HEK293 (cell line): ENCODE measurements at regions of chr13 and their contacts with region 1.

Region 1: GRCh38 chr13:94620286-94620896 is 18.7 kb downstream of the GPR180 start:
- H3K4me3 ChIP-seq: no peak overlapping the region
- H3K27ac ChIP-seq: no peak overlapping the region
- H3K4me1 ChIP-seq: no peaks in the 10 kb centered on the region
- CTCF ChIP-seq: no peak

Region 2: GRCh38 chr13:94384231-94384905 is 236.0 kb before region 1 on chr13:
- CTCF ChIA-PET with region 1: no interaction called
- POLR2A ChIA-PET with region 1: no interaction called
- H3K4me3 ChIP-seq: no peak overlapping the region
- H3K27ac ChIP-seq: no peak overlapping the region
- H3K4me1 ChIP-seq: no peaks in the 10 kb centered on the region
- CTCF ChIP-seq: no peak

Region 3: DNA sequence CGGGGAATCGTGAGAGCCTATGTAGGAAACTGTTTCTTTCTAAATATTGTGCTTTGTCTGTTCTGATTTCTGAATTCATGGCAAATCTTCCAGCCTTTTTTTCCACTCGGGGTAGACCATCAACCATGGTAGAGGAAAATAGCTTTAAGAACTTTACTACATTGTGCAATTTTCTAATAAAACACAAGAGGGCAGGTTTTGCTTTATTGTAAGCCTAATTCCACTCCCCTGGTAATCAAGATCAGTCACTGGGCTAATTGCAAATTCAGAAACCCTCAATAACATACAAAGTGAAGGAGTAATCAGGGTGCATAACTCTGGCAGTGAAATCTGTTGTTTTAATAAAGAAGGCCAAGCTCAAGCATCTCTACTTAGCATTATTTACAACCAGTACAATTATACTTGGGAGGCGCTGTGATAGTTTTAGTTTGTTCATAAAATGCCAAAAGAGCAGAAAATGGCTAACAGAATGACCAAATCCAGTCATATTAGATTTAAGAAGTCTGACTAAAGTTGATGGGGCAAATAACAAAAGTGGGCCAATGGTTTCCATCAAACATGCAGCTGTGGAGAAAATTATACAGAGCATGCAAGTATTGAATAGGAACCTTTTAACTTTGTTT is 184.7 kb before region 1 on chr13:
- CTCF ChIA-PET with region 1: interaction called, 170 read pairs
- POLR2A ChIA-PET with region 1: interaction called, 5 read pairs
- H3K4me3 ChIP-seq: no peak overlapping the region
- H3K27ac ChIP-seq: no peak overlapping the region
- H3K4me1 ChIP-seq: no peaks in the 10 kb centered on the region
- CTCF ChIP-seq: no peak

Region 4: DNA sequence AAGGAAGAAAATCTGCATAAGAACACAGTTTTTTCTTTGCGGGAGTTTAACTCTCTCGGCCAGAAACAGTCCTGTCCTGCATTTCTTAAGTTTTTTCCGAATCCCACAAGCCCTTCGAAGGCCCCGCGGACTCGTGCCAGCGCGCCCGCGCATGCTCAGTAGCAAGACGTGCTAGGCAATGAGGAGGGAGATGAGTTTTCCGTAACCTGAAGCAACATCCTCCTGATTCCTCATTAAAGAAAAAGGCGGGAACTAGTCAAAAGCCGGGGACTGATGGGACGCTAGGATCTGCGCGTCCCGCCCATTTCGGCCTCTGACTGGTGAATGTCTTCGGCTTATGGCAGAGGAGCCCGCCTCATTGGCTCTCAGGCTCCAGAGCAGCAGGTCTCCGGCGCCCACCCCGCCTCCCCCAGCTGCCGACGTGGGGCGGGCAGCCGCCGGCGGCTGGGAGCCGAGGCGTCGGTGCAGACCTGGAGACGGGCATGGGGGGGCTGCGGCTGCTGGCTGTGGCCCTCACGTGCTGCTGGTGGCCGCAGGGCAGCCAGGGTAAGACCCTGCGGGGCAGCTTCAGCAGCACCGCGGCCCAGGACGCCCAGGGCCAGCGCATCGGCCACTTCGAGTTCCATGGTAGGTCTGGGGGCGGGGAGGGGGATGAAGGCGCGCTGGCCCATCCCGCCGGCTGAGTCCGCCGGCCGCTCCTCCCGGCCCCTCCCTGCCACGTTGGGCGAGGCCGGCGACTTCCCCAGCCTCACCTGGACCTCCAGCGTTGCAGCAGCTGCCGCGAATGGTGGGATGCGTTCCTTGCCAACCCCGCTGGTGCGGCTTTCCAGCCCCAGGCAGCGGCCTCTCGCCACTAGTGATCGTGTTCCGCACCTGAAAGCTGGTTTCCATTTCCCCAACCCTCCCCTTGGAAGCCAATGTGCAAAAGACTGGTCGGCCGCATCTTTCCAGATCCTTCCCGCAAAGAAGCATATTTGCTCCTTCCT is 18.7 kb before region 1 on chr13 and contains the start of gene GPR180:
- CTCF ChIA-PET with region 1: interaction called, 11 read pairs
- POLR2A ChIA-PET with region 1: no interaction called
- H3K4me3 ChIP-seq: peak within 1 kb of the TSS; percentile 77
- H3K27ac ChIP-seq: peak within 1 kb of the TSS; percentile 35; the same call in 1 of the 2 replicates
- H3K4me1 ChIP-seq: no peaks in the 10 kb centered on the region
- CTCF ChIP-seq: no peak

Region 5: GRCh38 chr13:94630858-94631257 is 10.5 kb after region 1 on chr13:
- CTCF ChIA-PET with region 1: interaction called, 10 read pairs
- POLR2A ChIA-PET with region 1: no interaction called
- H3K4me3 ChIP-seq: no peak overlapping the region
- H3K27ac ChIP-seq: no peak overlapping the region
- H3K4me1 ChIP-seq: no peaks in the 10 kb centered on the region
- CTCF ChIP-seq: no peak

Region 6: DNA sequence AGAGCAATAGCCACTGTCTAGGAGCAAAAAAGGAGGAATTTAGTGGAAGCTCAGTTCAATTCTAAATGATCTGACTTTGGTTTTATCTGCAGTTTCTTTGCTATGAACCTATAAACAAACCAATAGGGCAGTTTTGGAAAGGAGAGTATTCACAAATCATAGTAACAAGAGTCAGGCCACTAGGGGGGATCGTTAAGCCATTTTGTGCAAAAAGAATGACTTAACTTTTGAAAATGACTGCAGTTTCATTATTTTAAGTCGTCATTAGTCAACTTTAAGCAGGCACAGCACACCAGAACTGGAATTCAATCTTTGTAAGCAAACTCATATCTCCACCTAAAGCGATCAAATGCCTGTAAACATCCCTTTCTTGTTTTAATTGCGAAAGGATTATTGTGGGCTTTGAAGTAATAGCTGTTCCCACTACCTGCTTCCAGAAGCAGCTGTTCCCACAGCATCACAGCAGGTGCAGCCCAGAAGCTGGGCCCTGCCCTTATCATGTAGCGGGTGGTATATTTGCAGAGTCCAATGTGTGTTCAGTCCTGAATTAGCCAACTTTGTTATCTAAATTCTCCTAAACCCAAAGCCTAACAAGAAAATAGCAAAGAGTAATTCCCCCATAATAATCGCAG is 40.4 kb after region 1 on chr13:
- CTCF ChIA-PET with region 1: interaction called, 18 read pairs
- POLR2A ChIA-PET with region 1: no interaction called
- H3K4me3 ChIP-seq: no peak overlapping the region
- H3K27ac ChIP-seq: no peak overlapping the region
- H3K4me1 ChIP-seq: no peaks in the 10 kb centered on the region
- CTCF ChIP-seq: no peak

Region 7: GRCh38 chr13:94829185-94829856 is 208.9 kb after region 1 on chr13:
- CTCF ChIA-PET with region 1: no interaction called
- POLR2A ChIA-PET with region 1: no interaction called
- H3K4me3 ChIP-seq: no peak overlapping the region
- H3K27ac ChIP-seq: no peak overlapping the region
- H3K4me1 ChIP-seq: no peaks in the 10 kb centered on the region
- CTCF ChIP-seq: no peak